Prostate gland (tissue), 2 donors: ENCODE measurements at regions of chr12 and their contacts with region 1.

Region 1: GRCh38 chr12:76559400-76560085 is at the start of gene OSBPL8:
- DNase-seq: peak; percentile 95
- H3K4me3 ChIP-seq: peak within 1 kb of the TSS; percentile 75 to 89
- H3K27ac ChIP-seq: peak within 1 kb of the TSS; percentile 83 to 94
- H3K4me1 ChIP-seq: no peaks in the 10 kb centered on the region
- H3K27me3 ChIP-seq: no peaks in the 10 kb centered on the region
- CTCF ChIP-seq: peak in 1 of 4 experiments; percentile 43
- POLR2A ChIP-seq: peak; percentile 84
- total RNA-seq, gene OSBPL8: 50.6 to 54.2 TPM

Region 2: DNA sequence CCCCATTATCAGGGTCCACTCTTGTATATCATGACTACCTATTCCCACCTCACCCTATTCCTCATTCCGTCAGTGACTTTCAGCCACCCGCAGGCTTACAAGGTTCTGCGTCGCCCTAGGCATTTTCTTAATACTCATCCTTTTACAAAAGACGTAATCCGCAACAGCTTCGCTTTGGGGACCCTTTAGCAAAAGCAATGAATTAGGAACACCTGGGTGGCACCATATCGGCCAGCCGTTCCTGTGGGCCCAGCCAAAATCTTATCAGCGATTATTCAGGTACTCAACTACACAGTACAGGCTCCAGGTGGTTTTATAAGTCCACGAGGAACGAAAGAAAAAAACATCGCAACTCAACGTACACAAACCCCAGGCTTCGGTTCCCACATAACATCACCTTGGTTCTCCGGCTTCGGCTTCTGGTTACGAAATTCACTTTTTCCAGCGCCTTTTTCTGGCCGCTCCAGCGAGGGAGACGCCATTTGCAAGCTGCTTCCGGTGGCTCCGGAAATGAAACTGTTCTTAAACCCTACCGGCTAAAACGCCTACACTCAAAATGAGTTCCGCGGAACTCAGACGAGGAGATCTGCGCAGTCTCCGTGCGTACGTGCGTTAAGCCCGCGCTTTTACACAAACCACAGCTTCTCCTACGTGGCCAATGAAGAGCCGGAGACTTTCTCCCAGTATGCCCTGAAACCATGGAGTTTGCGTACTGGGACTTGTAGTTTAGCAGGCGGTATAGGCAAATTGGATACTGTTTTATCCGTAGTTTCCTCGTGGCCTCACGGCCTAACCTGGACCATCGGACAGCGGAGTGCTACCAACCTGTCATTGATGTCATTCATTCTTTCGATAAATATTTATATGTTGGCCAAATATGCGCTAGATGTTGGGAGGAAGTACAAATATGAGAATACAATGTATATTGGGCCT is 1048.2 kb before region 1 on chr12 and contains the start of gene KRR1:
- intact Hi-C with region 1: loop called (anchors 2 kb)
- DNase-seq: peak; percentile 91
- H3K4me3 ChIP-seq: peak within 1 kb of the TSS; percentile 46 to 59
- H3K27ac ChIP-seq: peak within 1 kb of the TSS; percentile 50 to 53
- H3K4me1 ChIP-seq: peaks cover 8% of the 10 kb centered on the region
- H3K27me3 ChIP-seq: no peaks in the 10 kb centered on the region
- CTCF ChIP-seq: peak in 2 of 4 experiments; percentile 28 to 29
- POLR2A ChIP-seq: peak; percentile 40
- total RNA-seq, gene KRR1: 21.6 to 34.7 TPM